ENCODE measurements at regions of chr17 and their contacts with region 1.

Region 1: GRCh38 chr17:15944759-15945529 is at the start of gene ADORA2B:
- DNase-seq: no peak
- H3K4me3 ChIP-seq: peak within 1 kb of the TSS; percentile 67
- CTCF ChIP-seq: peak; percentile 59

Region 2: DNA sequence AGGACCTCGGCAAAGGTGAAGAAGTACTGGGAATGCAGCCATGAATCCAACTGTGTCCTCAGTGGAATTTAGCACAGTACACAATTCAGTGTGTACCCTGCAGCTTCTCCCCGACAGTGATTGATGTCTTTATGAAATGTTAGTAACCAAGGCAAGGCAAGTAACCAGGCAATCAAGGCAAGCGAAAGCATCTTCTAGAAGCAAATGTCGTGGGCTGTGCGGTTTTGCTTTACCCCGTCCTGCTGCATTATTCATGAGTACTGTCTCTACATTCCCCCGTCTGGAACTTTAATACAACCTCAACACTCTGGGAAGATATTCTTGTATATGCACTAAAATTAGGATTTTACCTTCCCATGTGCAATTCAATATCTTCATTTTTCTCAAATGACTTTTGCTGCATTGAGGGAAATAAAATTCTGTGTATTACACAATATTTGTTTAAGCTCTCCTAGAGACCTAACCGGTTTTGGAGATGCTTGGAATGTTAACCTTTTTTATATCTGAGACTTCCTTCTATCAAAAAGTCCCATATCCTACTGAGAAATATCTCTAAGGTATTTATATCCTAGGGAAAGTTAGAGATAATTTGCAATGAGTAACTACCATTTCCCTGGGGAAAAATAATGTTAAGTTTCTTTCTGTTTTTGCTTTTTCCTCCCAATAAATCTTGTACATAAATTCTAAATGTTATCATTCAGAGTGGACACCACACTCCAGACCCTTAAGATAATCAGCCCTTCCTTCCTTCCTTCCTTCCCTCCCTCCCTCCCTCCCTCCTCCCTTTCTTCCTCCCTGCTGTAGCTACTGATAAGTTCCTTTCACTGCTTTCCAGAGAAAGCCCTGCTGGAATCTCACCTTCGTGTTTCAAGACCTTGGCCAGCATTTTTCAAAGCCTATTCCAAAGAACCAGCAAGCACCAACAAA is 52.0 kb before region 1 on chr17:
- in situ Hi-C with region 1: loop called (anchors 5 kb)
- DNase-seq: peak; percentile 81
- H3K4me3 ChIP-seq: no peak overlapping the region
- CTCF ChIP-seq: no peak

Region 3: DNA sequence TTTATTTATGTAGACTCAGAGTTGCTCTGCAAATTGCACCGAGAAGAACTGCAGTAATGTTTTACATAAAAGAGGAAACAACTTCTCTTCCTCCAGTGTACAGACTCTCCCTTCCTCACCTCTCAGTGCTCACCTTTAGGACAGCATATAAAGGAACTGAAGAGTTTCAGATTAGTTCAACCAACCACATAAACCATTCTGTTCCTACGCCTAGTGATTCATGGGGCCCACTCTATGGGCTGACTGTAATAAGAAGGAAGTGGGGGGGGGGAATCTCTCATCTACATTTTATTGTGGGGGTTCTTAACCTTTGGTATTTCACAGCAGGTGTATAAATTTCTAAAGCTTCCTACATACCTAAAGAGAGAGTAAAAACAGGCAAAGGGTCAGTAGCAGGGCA is 36.3 kb after region 1 on chr17:
- in situ Hi-C with region 1: no loop called
- DNase-seq: no peak
- H3K4me3 ChIP-seq: no peak overlapping the region
- CTCF ChIP-seq: no peak

Region 4: DNA sequence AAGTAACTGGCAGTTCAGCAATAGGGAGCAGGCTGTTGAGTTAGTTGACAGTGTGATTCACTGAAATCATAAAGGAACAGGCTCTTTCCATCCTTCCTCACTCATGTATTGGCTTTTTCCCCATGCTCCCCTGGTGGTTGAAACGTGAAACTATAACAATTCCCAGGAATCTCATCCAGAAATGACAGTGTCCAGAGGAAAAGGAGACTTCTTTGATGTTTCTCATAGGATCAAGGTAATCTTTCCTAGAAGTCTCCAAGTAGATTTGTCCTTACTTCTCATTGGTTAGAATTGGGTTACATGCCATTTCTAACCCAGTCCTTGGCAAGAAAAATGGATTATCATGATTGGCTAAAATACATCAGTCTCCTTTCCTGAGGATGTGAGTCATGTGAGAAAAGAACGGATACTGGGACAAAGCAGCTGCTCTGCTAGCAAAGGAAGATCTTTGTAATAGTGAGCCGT is 69.0 kb after region 1 on chr17:
- in situ Hi-C with region 1: no loop called
- DNase-seq: peak; percentile 53
- H3K4me3 ChIP-seq: no peak overlapping the region
- CTCF ChIP-seq: peak; percentile 78

Region 5: DNA sequence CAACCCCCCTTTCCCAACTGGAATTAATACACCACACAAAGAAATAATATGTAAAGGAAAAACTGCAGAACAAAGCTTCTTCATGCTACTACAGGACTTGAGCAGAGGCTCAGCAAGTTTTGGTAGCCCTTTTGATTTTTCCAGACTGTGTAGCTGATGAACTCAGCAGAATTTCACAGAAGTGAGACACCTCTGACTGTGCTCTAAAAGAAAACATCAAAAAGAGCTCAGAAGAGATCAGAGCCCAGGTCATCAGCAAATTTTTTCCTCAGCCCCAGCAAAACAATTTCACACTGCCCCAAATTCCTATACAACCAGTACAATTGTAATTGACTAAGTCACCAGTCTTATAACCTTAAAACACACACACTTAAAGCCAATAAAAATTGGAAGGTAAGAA is 92.7 kb after region 1 on chr17:
- in situ Hi-C with region 1: loop called (anchors 10 kb)
- DNase-seq: peak; percentile 12
- H3K4me3 ChIP-seq: no peak overlapping the region
- CTCF ChIP-seq: no peak

Measured in astrocyte of the cerebellum (primary cell).